Thyroid gland (tissue), 4 donors: ENCODE measurements at regions of chr18 and their contacts with region 1.

Region 1: DNA sequence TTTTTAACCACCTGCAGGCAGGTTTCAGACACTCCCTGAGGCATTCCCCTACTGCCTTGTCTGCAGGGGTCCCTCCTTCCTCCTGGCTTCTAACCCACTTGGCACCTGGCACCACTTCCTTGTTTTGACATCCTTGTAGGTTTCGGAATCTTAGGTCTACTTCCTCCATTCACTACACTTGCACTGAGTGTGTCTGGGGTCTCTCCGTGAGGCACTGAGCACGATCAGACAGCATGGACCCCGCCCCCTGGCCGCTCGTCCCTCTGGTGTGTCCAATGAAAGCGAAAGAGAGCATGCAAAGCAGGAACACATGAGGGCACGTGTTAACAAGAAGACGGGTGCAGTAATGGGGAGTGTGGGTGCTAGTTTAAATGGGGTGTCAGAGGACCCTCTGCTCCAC is 63.8 kb downstream of the HAUS1 start:
- DNase-seq: no peak
- H3K4me3 ChIP-seq: no peak overlapping the region
- H3K27ac ChIP-seq: no peak overlapping the region
- H3K4me1 ChIP-seq: peaks cover 0 to 3% of the 10 kb centered on the region in 2 donors
- H3K27me3 ChIP-seq: no peaks in the 10 kb centered on the region
- CTCF ChIP-seq: no peak
- POLR2A ChIP-seq: no peak

Region 2: GRCh38 chr18:46281185-46282176 is 113.5 kb after region 1 on chr18:
- intact Hi-C with region 1: loop called (anchors 10 kb)
- DNase-seq: peak; percentile 78
- H3K4me3 ChIP-seq: no peak overlapping the region
- H3K27ac ChIP-seq: no peak overlapping the region
- H3K4me1 ChIP-seq: no peaks in the 10 kb centered on the region
- H3K27me3 ChIP-seq: no peaks in the 10 kb centered on the region
- CTCF ChIP-seq: peak; percentile 85 to 94 (median 92)
- POLR2A ChIP-seq: no peak